ENCODE measurements at regions of chr6 and their contacts with region 1.

Region 1: DNA sequence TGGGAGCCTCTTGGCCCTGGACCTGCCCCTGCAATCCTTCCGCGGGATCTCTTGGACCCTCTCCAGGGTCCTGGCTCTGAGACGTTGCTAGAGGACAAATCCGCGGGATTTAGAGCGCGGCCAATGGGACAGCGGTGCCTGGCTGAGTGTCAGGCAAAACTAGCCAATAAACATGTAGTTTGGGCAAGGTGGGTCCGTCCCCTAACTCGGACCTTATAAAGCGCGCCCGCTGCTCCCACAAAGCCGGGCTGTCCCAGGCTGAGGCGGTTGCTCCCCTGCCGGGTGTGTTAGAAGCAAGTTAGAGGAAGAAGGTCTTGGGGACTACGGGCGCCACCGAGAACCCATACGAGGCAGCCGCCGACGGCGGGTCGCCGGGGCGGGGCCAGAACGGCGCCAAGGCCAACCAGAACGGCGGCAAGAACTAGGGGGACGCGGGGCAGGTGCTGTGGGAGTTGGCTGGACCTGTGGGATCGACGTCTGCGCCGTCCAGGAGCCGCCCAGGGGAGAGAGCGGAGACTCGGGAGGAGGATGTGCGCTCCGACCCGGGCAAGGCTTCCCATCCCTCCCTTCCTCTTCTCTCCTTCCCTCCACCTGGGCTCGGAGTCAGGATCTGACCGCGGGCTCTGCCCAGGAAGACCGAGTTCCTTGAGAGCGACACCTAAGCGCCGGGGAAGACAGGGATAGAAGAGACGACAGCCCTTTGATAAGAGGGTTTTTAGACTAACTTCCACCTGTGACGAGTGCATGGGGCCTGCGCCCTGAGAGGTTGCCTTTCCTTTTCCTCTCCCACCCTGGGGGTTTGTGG is 6.5 kb upstream of the TMEM14A start:
- DNase-seq: peak; percentile 92 to 96 (median 93)
- ATAC-seq: peak; percentile 96 to 99 (median 98)
- H3K4me3 ChIP-seq: peak overlapping the region; percentile 58 to 76 (median 71)
- H3K27ac ChIP-seq: peak overlapping the region; percentile 20 to 84 (median 62)
- H3K4me1 ChIP-seq: no peaks in the 10 kb centered on the region
- H3K27me3 ChIP-seq: no peaks in the 10 kb centered on the region
- CTCF ChIP-seq: no peak

Region 2: GRCh38 chr6:52410991-52411390 is 253.4 kb before region 1 on chr6:
- intact Hi-C with region 1: loop called in 2 of 3 experiments (anchors 2 to 5 kb)
- DNase-seq: no peak
- ATAC-seq: no peak
- H3K4me3 ChIP-seq: no peak overlapping the region
- H3K27ac ChIP-seq: no peak overlapping the region
- H3K4me1 ChIP-seq: no peaks in the 10 kb centered on the region
- H3K27me3 ChIP-seq: no peaks in the 10 kb centered on the region
- CTCF ChIP-seq: no peak

Region 3: DNA sequence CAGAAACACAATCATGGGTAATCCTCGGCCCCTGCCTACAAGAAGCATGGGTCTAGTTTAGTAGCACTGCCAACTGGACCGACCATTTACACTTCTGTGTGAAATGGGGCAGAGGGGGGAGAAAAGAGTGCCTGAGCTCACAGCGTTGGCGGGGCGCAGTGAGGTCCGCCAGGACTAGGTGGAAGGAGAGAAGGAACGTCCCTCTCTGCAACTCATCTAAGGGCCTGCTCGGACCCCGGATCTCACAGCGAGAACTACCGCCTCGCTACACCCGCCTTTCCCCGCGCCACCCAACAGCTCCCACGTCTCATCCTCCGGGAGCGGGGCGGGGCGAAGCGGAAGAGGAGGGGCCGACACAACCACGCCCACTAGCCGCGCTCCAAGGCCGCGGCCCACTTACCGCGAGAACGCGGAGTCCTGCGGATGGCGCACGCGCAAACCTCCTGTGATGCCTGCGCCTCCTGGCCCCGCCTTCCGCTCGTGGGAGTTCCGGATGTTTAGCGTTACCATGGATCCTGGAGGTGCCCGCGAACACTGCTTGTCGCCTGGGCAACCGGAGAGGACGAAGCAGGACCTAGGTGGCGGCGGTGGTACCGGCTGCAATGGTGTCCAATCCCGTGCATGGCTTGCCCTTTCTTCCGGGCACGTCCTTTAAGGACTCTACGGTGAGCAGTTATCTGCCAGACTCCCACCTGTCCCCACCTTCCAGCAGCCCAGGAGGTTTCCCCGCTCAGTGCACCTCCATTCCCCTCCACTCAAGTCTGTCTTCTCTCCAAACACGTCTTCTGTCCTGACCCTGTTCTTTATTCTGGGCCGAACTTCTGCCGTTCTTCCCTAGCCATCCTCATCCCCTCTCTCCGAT is 244.3 kb before region 1 on chr6 and contains the start of gene EFHC1:
- intact Hi-C with region 1: loop called in 1 of 3 experiments (anchors 5 kb)
- DNase-seq: peak; percentile 97 to 100 (median 99)
- ATAC-seq: peak; percentile 96 to 99 (median 98)
- H3K4me3 ChIP-seq: peak within 1 kb of the TSS; percentile 49 to 93 (median 64)
- H3K27ac ChIP-seq: peak within 1 kb of the TSS in 3 of 4 donors; percentile 64 to 80 (median 73)
- H3K4me1 ChIP-seq: peaks cover 0 to 3% (median 0%) of the 10 kb centered on the region in 3 donors
- H3K27me3 ChIP-seq: no peaks in the 10 kb centered on the region
- CTCF ChIP-seq: no peak
- total RNA-seq, gene EFHC1: 5.5 to 15.1 (median 9.8) TPM

Region 4: DNA sequence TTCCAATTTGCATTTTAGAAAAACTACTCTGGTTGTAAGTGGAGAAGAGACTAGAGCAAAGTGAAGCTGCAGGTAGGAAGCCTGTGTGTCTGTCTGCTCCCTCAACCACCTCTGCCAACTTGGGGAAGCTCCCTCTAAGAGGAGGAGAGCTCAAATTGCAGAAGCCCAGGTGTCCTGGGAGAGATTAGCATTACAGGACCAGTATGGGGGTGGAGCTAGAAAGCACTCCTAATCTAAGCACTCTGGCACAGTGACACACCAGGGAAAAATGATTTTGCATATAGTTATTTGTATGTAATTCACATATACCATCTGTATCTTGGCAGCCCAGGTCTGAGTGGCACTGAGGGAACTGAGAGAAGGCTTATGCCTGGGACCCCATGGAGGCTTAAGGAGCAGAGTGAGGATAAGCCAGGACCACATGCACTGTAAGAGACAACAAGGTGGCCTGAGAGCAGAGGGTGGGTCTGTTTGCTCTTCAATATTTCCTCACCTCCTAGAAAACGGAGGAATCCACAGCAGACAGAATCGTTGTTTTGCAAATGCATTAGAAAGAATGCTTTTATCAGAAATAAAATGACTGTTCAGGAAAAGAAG is 85.3 kb after region 1 on chr6:
- intact Hi-C with region 1: no loop called
- DNase-seq: no peak
- ATAC-seq: peak in 1 of 4 donors; percentile 6
- H3K4me3 ChIP-seq: no peak overlapping the region
- H3K27ac ChIP-seq: peak overlapping the region in 1 of 4 donors; percentile 11
- H3K4me1 ChIP-seq: peaks cover 7 to 35% (median 31%) of the 10 kb centered on the region in 3 donors
- H3K27me3 ChIP-seq: no peaks in the 10 kb centered on the region
- CTCF ChIP-seq: no peak

Measured in pancreas (tissue), 10 donors.